ENCODE measurements at regions of chr20 and their contacts with region 1.

Region 1: GRCh38 chr20:59063358-59064213 is 21.0 kb upstream of the PRELID3B start:
- DNase-seq: peak; percentile 42 to 56
- ATAC-seq: peak; percentile 69 to 99 (median 96)
- H3K4me3 ChIP-seq: peak overlapping the region in 6 of 10 donors; percentile 1 to 39 (median 10)
- H3K27ac ChIP-seq: peak overlapping the region in 8 of 10 donors; percentile 19 to 70 (median 58)
- H3K4me1 ChIP-seq: peaks cover 0 to 21% (median 14%) of the 10 kb centered on the region in 9 donors
- H3K27me3 ChIP-seq: peaks cover 0 to 25% (median 0%) of the 10 kb centered on the region in 7 donors
- CTCF ChIP-seq: no peak

Region 2: GRCh38 chr20:57772276-57773030 is 1291.1 kb before region 1 on chr20:
- intact Hi-C with region 1: no loop called
- DNase-seq: no peak
- ATAC-seq: peak in 4 of 8 donors; percentile 34 to 68 (median 48)
- H3K4me3 ChIP-seq: no peak overlapping the region
- H3K27ac ChIP-seq: no peak overlapping the region
- H3K4me1 ChIP-seq: no peaks in the 10 kb centered on the region
- H3K27me3 ChIP-seq: peaks cover 0 to 9% (median 0%) of the 10 kb centered on the region in 7 donors
- CTCF ChIP-seq: no peak

Region 3: GRCh38 chr20:59007665-59008511 is 55.7 kb before region 1 on chr20:
- intact Hi-C with region 1: loop called in 1 of 10 experiments (anchors 2 kb)
- DNase-seq: peak in 1 of 2 donors; percentile 49
- ATAC-seq: peak in 1 of 8 donors; percentile 2
- H3K4me3 ChIP-seq: peak overlapping the region; percentile 65 to 95 (median 86)
- H3K27ac ChIP-seq: peak overlapping the region; percentile 75 to 98 (median 90)
- H3K4me1 ChIP-seq: peaks cover 21 to 81% (median 54%) of the 10 kb centered on the region in 9 donors
- H3K27me3 ChIP-seq: no peaks in the 10 kb centered on the region
- CTCF ChIP-seq: no peak

Region 4: DNA sequence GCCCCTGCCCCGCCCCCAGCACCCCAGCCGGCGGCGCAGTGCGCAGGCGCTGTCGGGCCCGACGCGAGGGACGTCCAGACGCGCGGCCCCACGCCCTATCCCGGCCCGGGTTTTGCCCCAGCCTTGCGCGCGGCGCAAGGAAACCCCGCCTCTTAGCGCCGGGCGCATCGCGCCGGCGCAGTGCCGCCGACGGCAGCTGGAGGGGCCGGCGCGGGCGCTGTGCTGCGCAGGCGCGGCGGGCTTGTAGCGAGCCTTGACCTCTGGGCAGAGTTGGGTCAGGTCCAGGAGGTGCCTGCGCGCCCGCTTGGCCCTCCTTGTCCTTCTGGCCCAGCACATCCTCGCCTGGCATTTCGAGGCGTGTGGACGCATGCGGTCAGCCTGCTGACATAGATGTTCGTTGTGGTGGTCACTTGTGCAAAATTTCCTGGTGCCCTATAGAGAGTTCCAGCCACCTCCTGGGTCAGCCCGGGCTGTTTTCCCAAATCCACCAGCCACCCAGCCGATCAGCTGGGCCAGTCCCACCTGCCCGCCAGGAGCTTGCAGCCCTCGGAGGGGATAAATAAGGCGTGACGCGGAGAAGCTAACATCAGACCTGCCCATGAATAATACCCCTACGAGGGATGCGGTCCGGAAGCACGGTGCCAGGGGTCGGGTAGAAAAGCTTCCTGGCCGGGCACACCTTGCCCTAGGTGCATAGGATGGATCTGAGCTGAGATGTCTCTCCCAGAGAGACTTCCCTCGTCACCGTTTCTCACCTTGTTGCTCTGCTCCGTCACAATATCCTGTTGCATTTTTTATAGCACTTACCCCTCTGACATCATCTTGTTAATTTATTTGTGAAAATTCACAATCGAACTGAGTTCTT is 20.6 kb before region 1 on chr20:
- intact Hi-C with region 1: loop called in 1 of 10 experiments (anchors 2 kb)
- DNase-seq: peak; percentile 91 to 96
- ATAC-seq: peak; percentile 98 to 99 (median 99)
- H3K4me3 ChIP-seq: peak overlapping the region; percentile 64 to 93 (median 86)
- H3K27ac ChIP-seq: peak overlapping the region; percentile 21 to 93 (median 89)
- H3K4me1 ChIP-seq: peaks cover 4 to 42% (median 37%) of the 10 kb centered on the region in 9 donors
- H3K27me3 ChIP-seq: no peaks in the 10 kb centered on the region
- CTCF ChIP-seq: peak in 1 of 9 donors; percentile 35

Region 5: GRCh38 chr20:59120491-59120890 is 56.9 kb after region 1 on chr20:
- intact Hi-C with region 1: no loop called
- DNase-seq: no peak
- ATAC-seq: no peak
- H3K4me3 ChIP-seq: no peak overlapping the region
- H3K27ac ChIP-seq: no peak overlapping the region
- H3K4me1 ChIP-seq: peaks cover 0 to 16% (median 0%) of the 10 kb centered on the region in 9 donors
- H3K27me3 ChIP-seq: peaks cover 0 to 21% (median 0%) of the 10 kb centered on the region in 7 donors
- CTCF ChIP-seq: no peak

Measured in heart right ventricle (tissue), 16 donors.